Activated T-helper 1 cell treated with anti-CD3 and anti-CD28 coated beads, Interleukin-12 subunit alpha, Interleukin-12 subunit beta, Interleukin-2, Interleukin-4 antibody, amounts not matched to agents 30 ng/mL and 10 ng/mL and 1 ng/mL, durations not matched to agents 14 hours and 24 hours and 36 hours (primary cell): ENCODE measurements at regions of chr6 and their contacts with region 1.

Region 1: GRCh38 chr6:144582939-144583613 is 297.9 kb downstream of the UTRN start:
- DNase-seq: peak; percentile 58
- H3K4me3 Mint-ChIP-seq: peak overlapping the region; percentile 82
- H3K27ac Mint-ChIP-seq: peak overlapping the region; percentile 91
- H3K4me1 Mint-ChIP-seq: peaks cover 55% of the 10 kb centered on the region
- H3K27me3 Mint-ChIP-seq: no peaks in the 10 kb centered on the region

Region 2: DNA sequence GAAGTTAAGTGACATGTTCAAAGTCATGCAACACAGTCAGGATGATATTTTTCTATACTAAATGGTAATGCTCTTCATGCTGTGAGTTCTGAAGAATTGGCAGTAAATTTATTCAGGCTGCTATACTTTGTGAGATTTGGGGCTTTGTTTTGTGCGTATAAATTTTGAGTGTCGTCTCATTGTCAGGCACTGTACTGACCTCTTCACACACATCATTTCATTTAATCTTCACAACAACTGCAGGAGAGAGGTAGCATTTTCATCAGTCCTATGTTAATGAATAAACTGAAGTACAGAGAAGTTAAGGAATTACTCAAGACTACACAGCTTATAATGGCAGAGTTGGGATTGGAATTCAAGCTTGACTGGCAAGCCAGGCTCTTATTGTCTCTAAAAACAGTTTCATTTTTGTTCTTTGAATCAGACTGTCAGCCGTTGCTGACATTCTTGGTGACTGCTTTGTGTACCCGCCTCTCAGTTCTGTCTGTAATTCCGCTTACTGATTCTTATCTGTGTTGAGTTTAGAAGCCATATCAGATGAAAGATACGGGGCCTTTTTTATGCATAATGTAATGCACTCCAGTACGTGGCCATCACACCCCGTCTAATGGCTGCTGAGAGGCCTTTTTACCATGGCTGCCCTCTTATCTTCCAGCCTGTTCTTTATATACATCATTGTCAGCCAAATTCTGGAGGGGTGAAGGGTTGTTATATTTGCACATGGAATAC is 23.0 kb before region 1 on chr6:
- intact Hi-C with region 1: loop called (anchors 1 kb)
- DNase-seq: peak; percentile 53
- H3K4me3 Mint-ChIP-seq: peak overlapping the region; percentile 61
- H3K27ac Mint-ChIP-seq: peak overlapping the region; percentile 86
- H3K4me1 Mint-ChIP-seq: peaks cover 31% of the 10 kb centered on the region
- H3K27me3 Mint-ChIP-seq: no peaks in the 10 kb centered on the region

Region 3: GRCh38 chr6:144653885-144654505 is 70.9 kb after region 1 on chr6:
- intact Hi-C with region 1: loop called (anchors 2 kb)
- DNase-seq: no peak
- H3K4me3 Mint-ChIP-seq: peak overlapping the region; percentile 4
- H3K27ac Mint-ChIP-seq: peak overlapping the region; percentile 35
- H3K4me1 Mint-ChIP-seq: peaks cover 31% of the 10 kb centered on the region
- H3K27me3 Mint-ChIP-seq: no peaks in the 10 kb centered on the region

Region 4: GRCh38 chr6:144778773-144779492 is 195.9 kb after region 1 on chr6:
- intact Hi-C with region 1: loop called (anchors 1 kb)
- DNase-seq: no peak
- H3K4me3 Mint-ChIP-seq: no peak overlapping the region
- H3K27ac Mint-ChIP-seq: no peak overlapping the region
- H3K4me1 Mint-ChIP-seq: no peaks in the 10 kb centered on the region
- H3K27me3 Mint-ChIP-seq: no peaks in the 10 kb centered on the region

Region 5: DNA sequence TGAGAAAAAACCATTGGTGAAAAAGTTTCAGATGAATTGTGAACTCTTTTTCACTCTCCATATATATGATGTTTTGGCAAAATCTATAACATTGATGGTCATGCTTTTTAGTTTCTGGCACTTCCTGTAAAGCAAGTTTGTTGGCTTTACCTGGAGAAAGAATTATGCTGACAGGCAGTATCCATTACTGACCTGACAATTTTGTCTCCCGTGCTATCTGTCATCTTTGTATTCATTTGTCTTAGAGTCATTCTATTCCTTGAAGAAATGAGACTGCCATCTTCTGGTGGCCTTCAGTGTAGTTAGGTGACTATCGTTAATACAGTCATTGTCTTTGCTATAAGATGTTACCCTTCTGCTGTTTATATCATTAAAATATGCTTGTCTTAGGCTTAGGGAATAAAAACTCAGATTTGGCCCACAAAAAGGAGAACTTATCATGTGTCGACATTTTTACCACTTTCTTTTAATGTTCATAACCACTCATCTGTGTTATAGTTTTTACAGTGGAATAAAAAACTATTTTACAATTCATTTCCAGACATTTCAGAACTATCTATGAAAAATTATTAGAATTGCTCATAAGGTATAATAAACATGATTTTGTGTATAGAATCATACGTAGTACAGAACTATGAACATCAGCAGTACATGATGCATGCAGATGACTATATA is 445.2 kb after region 1 on chr6:
- intact Hi-C with region 1: loop called (anchors 1 kb)
- DNase-seq: no peak
- H3K4me3 Mint-ChIP-seq: no peak overlapping the region
- H3K27ac Mint-ChIP-seq: no peak overlapping the region
- H3K4me1 Mint-ChIP-seq: peaks cover under 1% of the 10 kb centered on the region
- H3K27me3 Mint-ChIP-seq: peaks cover 28% of the 10 kb centered on the region

Region 6: DNA sequence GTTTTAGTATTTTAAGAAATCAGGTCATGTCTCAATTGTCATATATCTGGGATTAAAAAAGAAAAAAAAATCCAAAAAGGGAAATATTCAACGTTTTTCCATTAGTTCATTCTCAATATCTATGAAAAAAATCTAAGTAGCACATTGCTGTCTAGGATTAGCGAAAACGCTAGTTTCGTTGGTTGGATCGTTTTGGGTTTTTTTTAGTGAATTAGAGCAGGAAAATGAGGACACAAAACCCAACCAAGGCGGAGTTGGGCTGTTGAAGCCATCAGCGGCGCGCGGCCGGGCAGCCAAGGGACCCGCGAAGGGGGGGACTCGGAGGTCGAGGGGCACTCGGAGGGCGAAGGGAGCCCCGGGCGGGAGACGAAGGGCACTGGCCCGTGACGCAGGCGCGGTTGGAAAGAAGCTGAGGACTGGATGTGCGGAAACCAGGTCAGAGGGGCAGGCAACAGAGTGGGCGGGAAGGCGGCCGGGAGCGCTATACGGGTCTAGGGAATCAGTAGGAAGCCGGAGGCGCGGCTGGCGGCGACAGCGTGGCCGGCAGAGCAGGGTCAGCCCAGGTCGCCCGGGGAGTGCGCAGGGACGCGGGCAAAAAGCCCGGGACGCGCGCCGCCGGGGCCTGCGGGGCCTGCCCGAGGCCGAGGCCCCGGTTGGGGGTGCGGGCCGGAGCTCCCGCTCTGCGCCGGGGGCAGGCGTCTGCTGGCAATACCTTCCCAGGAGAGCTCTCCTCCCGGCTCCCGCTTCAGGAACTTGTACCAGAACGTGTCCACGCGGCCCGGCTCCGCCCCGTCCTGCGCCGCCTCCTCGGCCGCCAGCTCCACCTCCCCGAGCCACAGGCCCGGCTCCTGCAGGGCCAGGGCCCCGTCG is 1151.6 kb after region 1 on chr6:
- intact Hi-C with region 1: loop called (anchors 10 kb)
- DNase-seq: peak; percentile 52
- H3K4me3 Mint-ChIP-seq: peak overlapping the region; percentile 94
- H3K27ac Mint-ChIP-seq: peak overlapping the region; percentile 96
- H3K4me1 Mint-ChIP-seq: peaks cover 26% of the 10 kb centered on the region
- H3K27me3 Mint-ChIP-seq: no peaks in the 10 kb centered on the region